ENCODE measurements at regions of chr3 and their contacts with region 1.

Region 1: DNA sequence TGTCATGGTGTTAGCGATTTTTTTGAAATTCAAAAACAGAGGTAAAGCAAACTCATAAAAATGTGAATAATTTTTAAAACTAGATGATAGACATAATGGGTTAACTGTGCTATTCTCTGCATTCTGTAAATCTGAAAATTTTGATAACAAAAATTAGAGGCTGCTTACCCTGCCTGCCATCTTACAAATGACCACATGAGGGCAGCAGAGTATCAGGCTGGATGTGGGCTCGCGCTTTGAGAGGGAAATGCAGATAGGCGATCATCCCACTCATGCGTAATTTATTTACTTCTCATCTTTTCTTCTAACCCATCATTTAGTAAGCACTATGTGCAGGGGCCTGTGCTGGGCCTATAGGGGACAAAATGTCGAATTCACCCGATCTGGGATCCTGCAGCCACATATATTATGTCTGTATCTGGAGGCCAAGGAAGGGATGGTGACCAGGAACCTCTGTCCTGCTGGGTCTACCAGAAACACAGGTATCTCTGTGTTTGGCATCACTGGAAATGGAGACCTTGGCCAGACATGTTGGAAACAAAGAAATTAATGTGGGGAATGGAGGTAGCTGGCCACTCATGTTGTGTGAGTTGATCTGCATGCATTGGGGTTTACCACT is 7.8 kb upstream of the RAD18 start:
- DNase-seq: peak; percentile 32 to 84 (median 70)
- ATAC-seq: peak; percentile 91
- H3K4me3 ChIP-seq: no peak overlapping the region
- H3K4me3 Mint-ChIP-seq: peak overlapping the region in 1 of 10 donors; percentile 47
- H3K27ac ChIP-seq: no peak overlapping the region
- H3K27ac Mint-ChIP-seq: no peak overlapping the region
- H3K4me1 ChIP-seq: no peaks in the 10 kb centered on the region
- H3K4me1 Mint-ChIP-seq: peaks cover 0 to 5% (median 0%) of the 10 kb centered on the region in 7 donors
- H3K27me3 ChIP-seq: no peaks in the 10 kb centered on the region
- H3K27me3 Mint-ChIP-seq: peaks cover 5 to 20% (median 13%) of the 10 kb centered on the region in 5 donors

Region 2: GRCh38 chr3:9249273-9250192 is 278.5 kb after region 1 on chr3 and contains the start of gene SRGAP3:
- CTCF ChIA-PET with region 1: no interaction called
- POLR2A ChIA-PET with region 1: interaction called, 3 read pairs
- intact Hi-C with region 1: loop called in 1 of 2 experiments (anchors 5 kb)
- DNase-seq: peak; percentile 45 to 85 (median 80)
- ATAC-seq: peak; percentile 99
- H3K4me3 ChIP-seq: peak within 1 kb of the TSS; percentile 91
- H3K4me3 Mint-ChIP-seq: peak within 1 kb of the TSS; percentile 82 to 99 (median 92)
- H3K27ac ChIP-seq: peak within 1 kb of the TSS; percentile 60
- H3K27ac Mint-ChIP-seq: peak within 1 kb of the TSS; percentile 3 to 89 (median 78)
- H3K4me1 ChIP-seq: peaks cover 0 to 6% of the 10 kb centered on the region in 2 donors
- H3K4me1 Mint-ChIP-seq: peaks cover 9 to 43% (median 28%) of the 10 kb centered on the region in 7 donors
- H3K27me3 ChIP-seq: no peaks in the 10 kb centered on the region
- H3K27me3 Mint-ChIP-seq: peaks cover 0 to 29% (median 4%) of the 10 kb centered on the region in 5 donors
- total RNA-seq, gene SRGAP3: 1.4 to 6.0 (median 4.8) TPM

Region 3: DNA sequence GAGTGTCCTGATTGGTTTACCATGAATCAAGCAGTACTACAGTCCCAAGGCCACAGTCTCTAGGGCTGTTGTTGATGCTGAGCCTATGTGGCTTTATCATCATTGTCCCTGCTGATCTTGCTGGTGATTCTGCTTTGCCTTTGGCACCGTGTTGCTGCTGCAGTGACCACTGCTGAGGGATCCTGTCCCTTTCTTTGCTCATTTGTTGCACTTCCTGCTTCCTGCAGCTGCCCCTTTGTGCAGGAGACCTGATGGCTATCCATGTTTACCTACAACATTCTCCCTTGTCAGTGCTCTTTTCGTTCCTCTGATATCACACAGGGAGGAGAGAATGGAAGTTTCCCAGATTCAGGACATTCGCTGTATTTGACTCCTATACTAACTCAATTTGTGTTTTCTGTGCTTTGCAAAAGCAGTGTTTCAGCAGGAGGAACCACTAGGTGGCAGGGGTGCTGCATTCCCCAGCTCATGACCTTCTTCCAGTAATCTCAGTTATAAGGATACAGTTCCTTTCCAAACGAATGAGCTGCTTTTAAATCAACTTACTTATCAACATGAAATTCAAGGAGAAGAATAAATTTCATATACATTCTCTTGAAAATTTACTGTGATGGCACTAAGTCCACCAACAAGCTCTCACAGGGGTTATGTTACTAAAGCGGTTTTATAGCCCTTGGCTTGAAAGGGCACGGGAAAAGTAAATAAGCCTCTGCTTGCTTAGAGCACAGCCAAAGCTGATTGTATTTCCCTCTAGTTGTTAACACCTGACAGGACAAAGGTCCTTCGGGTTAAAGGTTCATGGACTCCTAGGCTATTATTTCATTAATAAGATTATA is 382.1 kb after region 1 on chr3:
- CTCF ChIA-PET with region 1: no interaction called
- POLR2A ChIA-PET with region 1: no interaction called
- intact Hi-C with region 1: loop called in 1 of 2 experiments (anchors 2 kb)
- DNase-seq: peak; percentile 21 to 57 (median 51)
- ATAC-seq: peak; percentile 85
- H3K4me3 ChIP-seq: no peak overlapping the region
- H3K4me3 Mint-ChIP-seq: no peak overlapping the region
- H3K27ac ChIP-seq: no peak overlapping the region
- H3K27ac Mint-ChIP-seq: peak overlapping the region in 2 of 9 donors; percentile 13 to 17
- H3K4me1 ChIP-seq: no peaks in the 10 kb centered on the region
- H3K4me1 Mint-ChIP-seq: peaks cover 4 to 13% (median 5%) of the 10 kb centered on the region in 7 donors
- H3K27me3 ChIP-seq: no peaks in the 10 kb centered on the region
- H3K27me3 Mint-ChIP-seq: peaks cover 0 to under 1% (median 0%) of the 10 kb centered on the region in 5 donors

Region 4: GRCh38 chr3:9503283-9503682 is 532.2 kb after region 1 on chr3:
- CTCF ChIA-PET with region 1: no interaction called
- POLR2A ChIA-PET with region 1: no interaction called
- intact Hi-C with region 1: loop called in 1 of 2 experiments (anchors 2 kb)
- DNase-seq: peak; percentile 38 to 71 (median 60)
- ATAC-seq: peak; percentile 71
- H3K4me3 ChIP-seq: no peak overlapping the region
- H3K4me3 Mint-ChIP-seq: no peak overlapping the region
- H3K27ac ChIP-seq: no peak overlapping the region
- H3K27ac Mint-ChIP-seq: no peak overlapping the region
- H3K4me1 ChIP-seq: peaks cover 7 to 11% of the 10 kb centered on the region in 2 donors
- H3K4me1 Mint-ChIP-seq: peaks cover 0 to 9% (median 5%) of the 10 kb centered on the region in 7 donors
- H3K27me3 ChIP-seq: peaks cover 5 to 15% of the 10 kb centered on the region in 2 donors
- H3K27me3 Mint-ChIP-seq: peaks cover 28 to 44% (median 34%) of the 10 kb centered on the region in 5 donors

Measured in naive thymus-derived CD4-positive, alpha-beta T cell (primary cell).